Dendritic cell treated with granulocyte-macrophage colony-stimulating factor and Interleukin-4, amounts not matched to agents 40 ng/mL and 50 ng/mL, for 4 days (primary cell): ENCODE measurements at regions of chr14 and their contacts with region 1.

Region 1: GRCh38 chr14:23929822-23930294 is 23.7 kb upstream of the DHRS4 start:
- H3K4me3 Mint-ChIP-seq: no peak overlapping the region
- H3K27ac Mint-ChIP-seq: no peak overlapping the region
- H3K4me1 Mint-ChIP-seq: no peaks in the 10 kb centered on the region
- H3K27me3 Mint-ChIP-seq: peaks cover 5% of the 10 kb centered on the region

Region 2: GRCh38 chr14:23588884-23589598 is 340.8 kb before region 1 on chr14:
- intact Hi-C with region 1: loop called (anchors 2 kb)
- H3K4me3 Mint-ChIP-seq: no peak overlapping the region
- H3K27ac Mint-ChIP-seq: peak overlapping the region; percentile 60
- H3K4me1 Mint-ChIP-seq: peaks cover 13% of the 10 kb centered on the region
- H3K27me3 Mint-ChIP-seq: peaks cover 24% of the 10 kb centered on the region

Region 3: DNA sequence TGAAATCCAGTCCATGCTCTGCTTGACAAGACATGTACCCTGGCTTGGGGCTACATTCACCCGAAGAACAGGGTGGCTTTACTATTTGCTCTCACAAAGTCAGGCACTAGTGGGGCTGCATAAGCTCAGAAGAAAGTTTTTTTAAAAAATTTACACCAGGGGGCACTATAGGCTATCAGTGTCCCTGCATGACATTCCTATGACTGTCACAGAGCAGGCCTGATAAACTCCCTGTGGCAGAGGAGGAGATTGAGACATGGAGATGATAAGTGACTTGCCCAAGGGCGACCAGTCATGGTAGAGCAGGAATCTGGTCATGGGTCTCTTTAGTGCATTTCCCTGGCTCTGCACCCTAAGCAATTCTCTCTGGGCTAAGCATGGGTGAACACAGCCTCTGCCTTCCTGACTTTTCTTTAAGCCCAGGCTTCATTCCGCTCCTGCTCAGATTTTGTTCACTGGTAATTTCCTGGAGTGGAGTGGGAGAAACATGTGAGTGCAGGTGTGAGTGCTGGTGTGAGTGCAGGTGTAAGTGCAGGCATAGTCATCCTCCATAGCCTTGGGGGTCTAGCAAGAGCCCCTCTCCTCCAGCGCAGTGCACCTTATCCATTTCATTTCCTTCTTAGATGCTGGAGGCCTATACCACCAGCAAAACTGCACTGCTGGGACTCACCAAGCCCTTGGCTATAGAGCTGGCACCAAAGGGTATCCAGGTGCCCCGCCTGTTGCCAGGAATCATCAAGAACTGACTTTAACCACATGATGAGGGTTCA is 202.1 kb before region 1 on chr14:
- intact Hi-C with region 1: loop called (anchors 1 kb)
- H3K4me3 Mint-ChIP-seq: no peak overlapping the region
- H3K27ac Mint-ChIP-seq: no peak overlapping the region
- H3K4me1 Mint-ChIP-seq: no peaks in the 10 kb centered on the region
- H3K27me3 Mint-ChIP-seq: peaks cover 2% of the 10 kb centered on the region